Right ventricle myocardium superior (tissue), 1 donor: ENCODE measurements at regions of chr21 and their contacts with region 1.

Region 1: GRCh38 chr21:15119486-15119885 is 54.7 kb upstream of the NRIP1 start:
- DNase-seq: no peak
- ATAC-seq: no peak

Region 2: DNA sequence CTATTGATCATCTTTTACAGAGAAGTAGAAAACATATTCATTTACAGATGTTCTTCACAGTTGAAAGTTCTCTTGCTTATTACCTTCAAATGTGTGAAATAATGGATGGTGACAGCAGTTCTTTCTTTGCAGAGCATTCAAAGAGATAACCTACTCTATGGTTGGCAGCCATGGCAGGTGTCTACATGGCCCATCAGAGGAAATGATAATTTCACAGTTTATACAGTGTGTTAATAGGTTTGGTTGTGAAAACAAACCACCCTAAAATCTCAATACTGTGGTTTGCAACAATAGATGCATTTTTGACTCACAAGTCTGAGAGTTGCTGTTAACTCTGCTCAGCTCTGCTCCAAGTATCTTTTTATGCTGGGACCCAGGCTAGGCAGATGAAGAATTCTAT is 332.2 kb before region 1 on chr21:
- intact Hi-C with region 1: no loop called
- DNase-seq: no peak
- ATAC-seq: no peak

Region 3: DNA sequence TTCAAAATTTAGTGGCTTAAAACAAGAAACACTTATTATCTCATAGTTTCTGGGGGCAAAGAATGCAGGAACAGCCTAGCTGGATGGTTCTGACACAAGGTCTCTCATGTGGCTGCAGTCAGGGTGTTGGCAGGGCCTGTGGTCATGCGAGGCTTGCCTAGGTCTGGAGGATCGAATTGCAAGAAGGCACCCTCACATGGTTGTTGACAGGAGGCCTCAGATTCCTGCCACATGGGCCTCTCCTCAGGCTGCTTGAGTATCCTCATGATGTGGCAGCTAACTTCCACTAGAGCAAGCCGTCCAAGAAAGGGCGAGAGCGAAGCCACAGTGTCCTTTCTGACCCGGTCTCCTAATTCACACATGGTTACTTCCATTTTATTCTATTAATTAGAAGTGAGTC is 48.5 kb before region 1 on chr21:
- intact Hi-C with region 1: loop called (anchors 5 kb)
- DNase-seq: no peak
- ATAC-seq: no peak

Region 4: DNA sequence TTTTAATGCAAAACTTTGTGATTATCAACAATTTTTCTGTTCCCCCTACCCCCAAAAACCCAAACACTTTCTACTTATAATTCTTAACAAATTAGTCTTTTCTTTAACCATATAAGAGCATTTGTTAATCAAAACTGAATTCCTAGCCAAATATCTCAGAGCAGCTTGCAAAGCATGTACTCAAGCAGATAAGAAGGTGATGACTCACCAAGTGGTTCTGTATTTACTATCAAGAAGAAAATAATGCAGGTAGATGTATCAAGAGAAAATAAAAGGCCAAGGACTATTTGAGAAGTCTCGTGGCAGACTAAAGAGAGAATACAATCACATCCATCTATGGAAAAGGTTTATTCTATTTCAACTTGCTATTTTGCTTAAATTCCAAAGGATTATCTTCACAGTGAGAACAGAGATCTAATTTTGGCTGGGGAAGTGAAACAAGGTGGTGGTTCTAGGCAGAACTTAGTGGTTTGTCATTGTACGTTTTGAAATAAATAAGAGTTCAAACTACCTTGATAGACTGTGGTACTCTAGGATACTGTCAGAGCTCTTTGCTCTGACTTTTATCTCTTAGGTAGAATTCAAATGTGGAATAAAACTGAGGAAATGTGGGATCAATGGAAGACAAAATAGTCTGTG is 40.0 kb after region 1 on chr21:
- intact Hi-C with region 1: no loop called
- DNase-seq: no peak
- ATAC-seq: no peak

Region 5: GRCh38 chr21:15309721-15310120 is 190.2 kb after region 1 on chr21:
- intact Hi-C with region 1: no loop called
- DNase-seq: peak; percentile 82
- ATAC-seq: peak; percentile 96